BJ (cell line): ENCODE measurements at regions of chr16 and their contacts with region 1.

Region 1: DNA sequence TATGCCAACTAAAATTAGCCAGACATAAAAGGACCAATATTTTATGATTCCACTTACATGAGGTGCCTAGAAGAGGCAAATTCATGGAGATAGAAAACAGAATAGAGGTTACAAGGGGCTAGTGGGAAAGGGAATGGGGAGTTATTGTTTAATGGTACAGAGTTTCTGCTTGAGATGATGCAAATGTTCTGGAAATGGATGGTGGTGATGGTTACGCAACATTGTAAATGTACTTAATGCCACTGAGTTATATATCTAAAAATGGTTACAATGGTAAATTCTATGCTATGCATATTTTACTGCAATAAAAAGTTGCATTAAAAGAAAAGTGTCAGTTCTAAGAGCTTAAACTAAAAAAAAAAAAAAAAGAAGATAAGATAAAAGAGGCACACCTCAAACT is 17.9 kb downstream of the MT1X start:
- DNase-seq: no peak
- H3K4me3 ChIP-seq: no peak overlapping the region
- H3K27me3 ChIP-seq: no peaks in the 10 kb centered on the region; the same call in 1 of the 2 replicates
- CTCF ChIP-seq: no peak

Region 2: DNA sequence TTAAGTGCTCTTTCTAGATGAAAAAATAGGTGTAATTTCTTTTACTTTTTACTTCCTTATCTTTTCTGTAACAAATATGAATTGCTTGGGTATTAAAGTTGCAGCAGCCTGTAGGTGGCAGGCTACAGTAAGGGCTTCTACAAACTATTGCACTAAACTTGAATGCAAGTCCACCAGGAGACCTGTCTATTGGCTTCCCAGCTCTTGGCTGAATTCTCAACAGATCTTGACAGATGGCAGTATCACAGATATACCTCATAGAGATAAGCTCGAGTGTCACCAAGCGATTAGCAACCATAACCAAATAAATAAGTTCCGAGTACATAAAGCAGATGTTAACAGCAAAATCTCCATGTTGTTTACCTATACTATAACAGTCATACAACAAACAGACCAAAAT is 186.2 kb before region 1 on chr16:
- CTCF ChIA-PET with region 1: interaction called, 23 read pairs
- POLR2A ChIA-PET with region 1: no interaction called
- DNase-seq: peak; percentile 15
- H3K4me3 ChIP-seq: no peak overlapping the region
- H3K27me3 ChIP-seq: no peaks in the 10 kb centered on the region
- CTCF ChIP-seq: peak; percentile 75

Region 3: GRCh38 chr16:56681939-56682702 is 18.1 kb before region 1 on chr16 and contains the start of gene MT1X:
- CTCF ChIA-PET with region 1: interaction called, 10 read pairs
- POLR2A ChIA-PET with region 1: no interaction called
- DNase-seq: peak; percentile 31
- H3K4me3 ChIP-seq: peak within 1 kb of the TSS; percentile 46
- H3K27me3 ChIP-seq: peaks cover 2% of the 10 kb centered on the region; the same call in 1 of the 2 replicates
- CTCF ChIP-seq: no peak
- polyA plus RNA-seq, gene MT1X: 55.5 and 60.2 TPM in 2 replicates

Region 4: GRCh38 chr16:56715120-56715519 is 14.9 kb after region 1 on chr16:
- CTCF ChIA-PET with region 1: interaction called, 16 read pairs
- POLR2A ChIA-PET with region 1: no interaction called
- DNase-seq: no peak
- H3K4me3 ChIP-seq: no peak overlapping the region
- H3K27me3 ChIP-seq: peaks cover 3% of the 10 kb centered on the region
- CTCF ChIP-seq: no peak

Region 5: GRCh38 chr16:56866943-56867830 is 167.0 kb after region 1 on chr16:
- CTCF ChIA-PET with region 1: no interaction called
- POLR2A ChIA-PET with region 1: no interaction called
- DNase-seq: no peak
- H3K4me3 ChIP-seq: no peak overlapping the region
- H3K27me3 ChIP-seq: no peaks in the 10 kb centered on the region
- CTCF ChIP-seq: peak; percentile 66